SK-N-SH (cell line): ENCODE measurements at regions of chr7 and their contacts with region 1.

Region 1: DNA sequence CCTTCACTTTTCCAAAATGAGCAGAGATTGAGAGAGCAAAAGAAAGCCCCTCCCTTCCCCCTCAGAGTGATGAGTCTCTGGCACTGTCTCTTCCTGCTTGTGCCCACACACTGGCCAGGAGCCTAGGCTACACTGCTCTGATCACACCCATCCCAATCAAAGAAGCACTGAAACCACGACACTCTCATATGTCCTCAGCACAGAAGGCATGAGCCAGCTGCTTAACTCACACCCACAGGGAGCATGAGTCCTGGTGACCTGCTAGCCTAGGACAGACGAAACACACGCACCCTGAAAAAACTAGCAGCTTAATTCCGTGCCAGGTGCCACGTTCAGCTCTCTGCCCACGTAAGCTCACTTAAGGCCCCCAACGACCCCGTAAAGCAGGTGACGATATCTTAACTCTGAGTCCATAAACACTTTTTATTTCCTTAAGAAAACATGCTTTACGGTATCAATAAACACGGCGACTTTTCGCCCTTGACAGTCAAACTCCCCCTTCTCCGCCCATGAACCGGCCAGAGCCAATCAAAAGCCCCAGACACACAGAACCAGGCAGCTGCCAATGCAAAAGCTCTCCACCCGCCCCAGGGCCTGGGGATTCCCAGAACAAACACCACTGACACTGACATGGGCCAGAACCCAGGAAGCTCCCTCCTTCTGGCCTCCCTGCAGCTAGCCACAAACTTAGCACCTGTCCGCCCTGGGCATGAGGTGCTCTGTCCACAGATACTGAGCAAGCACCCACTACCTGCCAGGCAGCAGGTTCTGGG is 69.0 kb downstream of the TNRC18 start:
- DNase-seq: peak; percentile 99
- H3K4me3 ChIP-seq: peak overlapping the region in 1 of 2 experiments; percentile 20; a peak in 1 of 4 replicates
- H3K27ac ChIP-seq: peak overlapping the region in 1 of 2 experiments; percentile 56; a peak in 2 of 4 replicates
- H3K4me1 ChIP-seq: peaks cover 12 to 15% of the 10 kb centered on the region in 2 experiments; a peak in 2 of 4 replicates
- H3K27me3 ChIP-seq: no peaks in the 10 kb centered on the region
- CTCF ChIP-seq: no peak
- EP300 ChIP-seq: peak in 1 of 2 experiments; percentile 83; a peak in 2 of 4 replicates
- RAD21 ChIP-seq: 0 out of 2 replicates have a peak, but pooled peaks have one; percentile 15

Region 2: GRCh38 chr7:5200561-5201270 is 153.9 kb before region 1 on chr7:
- CTCF ChIA-PET with region 1: no interaction called
- POLR2A ChIA-PET with region 1: no interaction called
- DNase-seq: no peak
- H3K4me3 ChIP-seq: no peak overlapping the region
- H3K27ac ChIP-seq: no peak overlapping the region
- H3K4me1 ChIP-seq: no peaks in the 10 kb centered on the region
- H3K27me3 ChIP-seq: no peaks in the 10 kb centered on the region
- CTCF ChIP-seq: no peak
- EP300 ChIP-seq: no peak
- RAD21 ChIP-seq: no peak

Region 3: GRCh38 chr7:5210751-5211338 is 143.8 kb before region 1 on chr7:
- CTCF ChIA-PET with region 1: no interaction called
- POLR2A ChIA-PET with region 1: no interaction called
- DNase-seq: no peak
- H3K4me3 ChIP-seq: no peak overlapping the region
- H3K27ac ChIP-seq: no peak overlapping the region
- H3K4me1 ChIP-seq: no peaks in the 10 kb centered on the region; a peak in 1 of 4 replicates
- H3K27me3 ChIP-seq: no peaks in the 10 kb centered on the region
- CTCF ChIP-seq: no peak
- EP300 ChIP-seq: no peak
- RAD21 ChIP-seq: no peak

Region 4: GRCh38 chr7:5333121-5334045 is 21.3 kb before region 1 on chr7:
- CTCF ChIA-PET with region 1: no interaction called
- POLR2A ChIA-PET with region 1: no interaction called
- DNase-seq: peak; percentile 33
- H3K4me3 ChIP-seq: no peak overlapping the region
- H3K27ac ChIP-seq: no peak overlapping the region
- H3K4me1 ChIP-seq: no peaks in the 10 kb centered on the region
- H3K27me3 ChIP-seq: no peaks in the 10 kb centered on the region
- CTCF ChIP-seq: no peak
- EP300 ChIP-seq: no peak
- RAD21 ChIP-seq: no peak

Region 5: GRCh38 chr7:5370454-5371353 is 16.1 kb after region 1 on chr7:
- CTCF ChIA-PET with region 1: interaction called, 94 read pairs
- POLR2A ChIA-PET with region 1: no interaction called
- DNase-seq: no peak
- H3K4me3 ChIP-seq: no peak overlapping the region
- H3K27ac ChIP-seq: no peak overlapping the region
- H3K4me1 ChIP-seq: no peaks in the 10 kb centered on the region
- H3K27me3 ChIP-seq: no peaks in the 10 kb centered on the region
- CTCF ChIP-seq: no peak
- EP300 ChIP-seq: no peak
- RAD21 ChIP-seq: no peak

Region 6: DNA sequence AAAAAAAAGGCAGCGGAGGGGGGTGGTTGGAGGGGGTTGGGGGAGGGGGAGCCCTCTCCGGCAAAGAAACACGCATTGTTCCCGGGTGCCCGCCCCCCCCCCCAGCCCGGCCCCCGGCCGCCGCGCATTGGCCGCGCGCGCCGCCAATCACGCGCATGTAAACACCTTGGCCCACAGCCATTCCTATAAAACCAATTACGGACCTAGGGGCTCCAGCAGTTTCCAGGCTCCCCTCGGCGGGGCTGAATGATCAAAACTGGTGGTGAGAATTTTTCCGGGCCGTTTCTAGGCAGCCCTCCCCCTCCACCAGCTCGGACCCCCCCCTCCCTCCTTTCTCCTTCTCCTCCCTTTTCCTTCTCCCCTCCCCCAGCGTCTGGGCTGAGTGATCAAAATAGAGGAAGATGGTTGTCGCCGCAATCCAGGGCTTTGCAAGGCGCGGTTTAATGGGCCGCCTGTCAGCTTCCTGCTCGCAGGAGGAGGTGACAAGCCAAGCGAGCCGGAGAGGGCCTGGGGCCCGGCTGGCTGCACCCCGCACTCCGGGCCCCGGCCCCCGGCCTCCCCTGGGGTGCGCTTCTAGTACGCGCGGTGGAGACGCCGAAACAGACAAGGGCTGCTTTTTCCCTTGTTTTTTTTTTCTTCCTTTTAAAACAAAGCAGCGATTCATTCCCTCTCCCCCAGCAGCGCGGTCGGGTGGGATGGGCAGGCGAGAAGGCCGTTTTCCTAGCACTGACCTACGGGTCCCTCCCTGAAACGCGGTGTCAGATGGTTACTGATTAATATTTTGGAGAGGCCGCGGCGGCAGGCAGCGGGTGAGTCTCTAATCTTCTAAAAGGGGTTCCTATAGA is 69.4 kb after region 1 on chr7:
- CTCF ChIA-PET with region 1: interaction called, 3 read pairs
- POLR2A ChIA-PET with region 1: interaction called, 10 read pairs
- DNase-seq: peak; percentile 98
- H3K4me3 ChIP-seq: peak overlapping the region; percentile 99 to 100
- H3K27ac ChIP-seq: peak overlapping the region; percentile 97 to 99
- H3K4me1 ChIP-seq: peaks cover 6 to 20% of the 10 kb centered on the region in 2 experiments; a peak in 3 of 4 replicates
- H3K27me3 ChIP-seq: no peaks in the 10 kb centered on the region
- CTCF ChIP-seq: no peak
- EP300 ChIP-seq: peak; percentile 62 to 63; a peak in 3 of 4 replicates
- RAD21 ChIP-seq: no peak; the same call in 1 of the 2 replicates